Posterior cingulate gyrus (tissue), 11 donors: ENCODE measurements at regions of chr7 and their contacts with region 1.

Region 1: DNA sequence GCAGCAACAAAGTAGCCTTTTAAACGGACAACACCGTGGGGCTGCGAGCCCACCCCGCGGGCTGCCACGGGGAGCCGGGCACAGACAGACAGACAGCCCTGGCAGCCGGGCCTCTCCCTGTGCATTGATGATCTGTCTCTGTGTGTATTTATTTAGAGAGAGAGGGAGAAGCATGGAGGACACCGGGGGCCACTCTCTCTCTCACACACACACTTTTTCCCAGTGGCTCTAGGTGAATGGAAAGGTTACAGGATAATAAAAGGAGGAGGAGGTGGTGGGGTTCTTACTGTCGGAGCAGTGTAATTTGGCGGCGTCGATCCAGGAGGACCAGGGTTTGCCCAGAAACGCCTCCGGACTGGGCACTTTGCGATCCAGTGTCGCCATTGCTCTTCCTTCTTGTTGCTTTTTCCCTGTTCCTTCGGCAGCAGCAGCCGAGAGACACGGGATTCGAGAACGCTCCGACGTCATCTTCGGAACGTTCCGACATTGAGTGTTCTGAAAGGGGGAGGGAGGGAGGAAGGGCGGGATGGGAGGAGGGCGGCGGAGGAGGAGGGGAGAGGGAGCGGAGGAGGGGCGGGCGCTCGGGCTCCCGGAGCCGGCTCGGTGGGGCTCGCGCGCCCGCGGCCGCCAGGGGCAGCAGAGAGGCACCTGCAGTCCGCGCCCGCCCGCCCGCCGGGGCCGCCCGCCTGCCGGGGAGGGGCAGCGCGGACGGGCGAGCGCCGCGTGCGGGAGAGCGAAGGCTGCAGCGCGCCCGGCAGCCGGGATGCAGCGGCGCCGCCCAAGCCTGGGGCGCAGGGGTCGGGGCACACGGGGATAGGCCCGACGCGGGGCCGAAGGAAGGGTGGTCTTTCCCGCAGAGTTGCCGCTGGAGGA is at the start of gene ATXN7L1:
- DNase-seq: peak; percentile 85 to 99 (median 92)

Region 2: DNA sequence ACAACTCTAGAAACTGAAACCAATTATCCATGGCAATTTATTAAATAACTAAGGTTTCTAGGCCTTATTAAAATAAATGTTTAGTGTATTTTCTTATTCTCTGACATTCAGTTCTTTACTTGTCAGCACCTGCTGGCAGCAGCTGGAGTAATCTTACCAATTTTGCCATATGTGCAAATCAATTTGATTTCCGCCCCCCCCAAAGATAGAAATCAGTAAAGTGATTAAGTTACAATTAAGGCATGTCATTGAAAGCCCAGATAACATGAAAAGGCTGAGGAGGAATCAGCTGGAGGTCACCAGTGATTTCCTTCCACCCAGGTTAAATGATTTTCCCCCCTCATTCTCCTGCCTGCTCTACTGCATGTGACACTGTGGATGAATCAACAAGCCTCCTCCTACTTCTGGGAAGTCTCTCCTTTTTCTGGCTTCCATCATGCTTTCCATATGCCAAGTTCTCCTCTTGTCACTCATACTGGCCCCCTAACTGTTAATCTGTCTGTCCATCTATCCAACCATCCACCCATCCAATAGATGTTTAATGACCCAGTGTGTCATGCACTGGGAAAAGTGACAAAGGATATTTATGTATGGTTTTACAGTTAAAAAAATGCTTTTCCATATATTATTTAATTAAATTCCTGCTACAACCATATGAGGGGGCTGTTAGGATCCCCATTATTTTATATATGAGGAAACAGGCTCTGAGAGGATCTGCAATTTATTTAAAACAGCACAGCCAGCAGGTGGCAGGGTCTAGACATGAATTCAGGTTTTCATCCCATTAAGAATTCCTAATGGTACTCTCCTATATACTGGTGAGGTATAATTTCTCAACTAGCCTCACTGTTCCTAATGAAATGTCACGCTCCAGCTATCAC is 116.4 kb before region 1 on chr7:
- intact Hi-C with region 1: loop called (anchors 10 kb)
- DNase-seq: peak in 5 of 10 donors; percentile 45 to 86 (median 61)

Region 3: GRCh38 chr7:105990726-105991453 is 114.6 kb after region 1 on chr7:
- intact Hi-C with region 1: no loop called
- DNase-seq: no peak

Region 4: DNA sequence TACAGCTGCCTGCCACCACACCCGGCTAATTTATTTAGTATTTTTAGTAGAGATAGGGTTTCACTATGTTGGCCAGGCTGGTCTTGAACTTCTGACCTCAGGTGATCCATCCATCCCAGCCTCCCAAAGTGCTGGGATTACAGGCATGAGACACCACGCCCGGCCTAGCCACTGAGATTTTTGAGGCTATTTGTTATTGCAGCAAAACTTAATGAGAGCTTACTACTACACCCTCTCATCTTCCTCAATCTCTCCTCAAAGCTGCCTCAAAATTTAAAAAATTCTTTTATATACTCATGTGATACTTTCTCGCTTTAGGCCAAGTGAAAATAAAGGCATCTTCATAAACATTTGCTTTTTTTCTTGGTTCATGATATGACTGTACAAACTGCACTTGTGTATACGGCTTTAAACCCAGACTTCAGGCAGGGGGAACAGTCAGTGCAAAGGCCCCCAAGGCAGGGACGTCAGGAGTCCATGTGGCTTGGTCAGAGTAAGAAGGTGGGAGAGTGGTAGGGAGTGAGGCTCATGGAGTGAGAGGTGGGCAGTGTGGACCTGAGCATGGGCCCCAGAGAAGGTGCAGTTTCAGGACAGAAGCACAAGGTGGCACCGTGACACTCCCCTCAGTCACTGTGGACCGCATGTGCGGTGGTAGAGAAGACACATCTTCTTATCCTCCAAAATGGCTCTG is 180.3 kb after region 1 on chr7:
- intact Hi-C with region 1: no loop called
- DNase-seq: peak; percentile 54 to 97 (median 78)

Region 5: DNA sequence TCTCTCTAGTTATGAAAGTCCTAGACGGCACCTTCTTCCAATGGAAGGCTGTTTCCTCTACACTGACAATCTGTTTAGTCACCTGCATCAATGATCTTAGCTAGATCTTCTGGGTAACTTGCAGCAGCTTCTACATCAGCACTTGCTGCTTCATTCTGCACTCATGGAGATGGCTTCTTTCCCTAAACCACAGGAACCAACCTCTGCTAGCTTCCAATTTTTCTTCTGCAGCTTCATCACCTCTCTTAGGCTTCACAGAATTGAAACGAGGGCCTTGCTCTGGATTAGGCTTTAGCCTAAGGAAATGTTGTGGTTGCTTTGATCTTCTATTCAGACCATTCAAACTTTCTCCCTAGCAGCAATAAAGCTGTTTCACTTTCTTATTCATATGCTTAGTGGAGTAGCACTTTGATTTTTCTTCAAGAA is 383.8 kb after region 1 on chr7:
- intact Hi-C with region 1: no loop called
- DNase-seq: no peak

Region 6: GRCh38 chr7:106895246-106895864 is 1019.0 kb after region 1 on chr7:
- intact Hi-C with region 1: no loop called
- DNase-seq: peak in 1 of 10 donors; percentile 50